ENCODE measurements at regions of chr19 and their contacts with region 1.

Region 1: GRCh38 chr19:38095411-38096308 is 128.4 kb downstream of the DPF1 start:
- DNase-seq: peak in 34 of 35 experiments; percentile 4 to 63 (median 38)
- ATAC-seq: peak; percentile 44 to 67 (median 55)
- H3K4me3 ChIP-seq: no peak overlapping the region
- H3K4me3 Mint-ChIP-seq: no peak overlapping the region
- H3K27ac ChIP-seq: no peak overlapping the region
- H3K27ac Mint-ChIP-seq: no peak overlapping the region
- H3K4me1 ChIP-seq: no peaks in the 10 kb centered on the region
- H3K4me1 Mint-ChIP-seq: peaks cover 6 to 7% (median 6%) of the 10 kb centered on the region in 3 donors
- H3K27me3 ChIP-seq: no peaks in the 10 kb centered on the region
- H3K27me3 Mint-ChIP-seq: no peaks in the 10 kb centered on the region

Region 2: GRCh38 chr19:38049105-38049649 is 46.5 kb before region 1 on chr19:
- CTCF ChIA-PET with region 1: no interaction called
- POLR2A ChIA-PET with region 1: no interaction called
- DNase-seq: peak; percentile 17 to 83 (median 43)
- ATAC-seq: peak; percentile 91 to 93 (median 92)
- H3K4me3 ChIP-seq: peak overlapping the region; percentile 34 to 53
- H3K4me3 Mint-ChIP-seq: peak overlapping the region; percentile 72 to 82 (median 79)
- H3K27ac ChIP-seq: peak overlapping the region; percentile 89
- H3K27ac Mint-ChIP-seq: peak overlapping the region; percentile 95 to 96
- H3K4me1 ChIP-seq: peaks cover 24 to 44% of the 10 kb centered on the region in 2 experiments
- H3K4me1 Mint-ChIP-seq: peaks cover 49 to 64% (median 51%) of the 10 kb centered on the region in 3 donors
- H3K27me3 ChIP-seq: no peaks in the 10 kb centered on the region
- H3K27me3 Mint-ChIP-seq: no peaks in the 10 kb centered on the region

Region 3: GRCh38 chr19:38115271-38115802 is 19.7 kb after region 1 on chr19:
- CTCF ChIA-PET with region 1: interaction called in 1 of 2 experiments, 3 read pairs
- POLR2A ChIA-PET with region 1: interaction called in 1 of 2 experiments, 13 read pairs
- DNase-seq: no peak
- ATAC-seq: peak in 1 of 4 experiments; percentile 62
- H3K4me3 ChIP-seq: no peak overlapping the region
- H3K4me3 Mint-ChIP-seq: no peak overlapping the region
- H3K27ac ChIP-seq: no peak overlapping the region
- H3K27ac Mint-ChIP-seq: peak overlapping the region in 1 of 2 donors; percentile 22
- H3K4me1 ChIP-seq: peaks cover 6 to 15% of the 10 kb centered on the region in 2 experiments
- H3K4me1 Mint-ChIP-seq: peaks cover 15 to 23% (median 16%) of the 10 kb centered on the region in 3 donors
- H3K27me3 ChIP-seq: no peaks in the 10 kb centered on the region
- H3K27me3 Mint-ChIP-seq: no peaks in the 10 kb centered on the region

Measured in T-cell (primary cell).